ENCODE measurements at regions of chr15 and their contacts with region 1.

Region 1: DNA sequence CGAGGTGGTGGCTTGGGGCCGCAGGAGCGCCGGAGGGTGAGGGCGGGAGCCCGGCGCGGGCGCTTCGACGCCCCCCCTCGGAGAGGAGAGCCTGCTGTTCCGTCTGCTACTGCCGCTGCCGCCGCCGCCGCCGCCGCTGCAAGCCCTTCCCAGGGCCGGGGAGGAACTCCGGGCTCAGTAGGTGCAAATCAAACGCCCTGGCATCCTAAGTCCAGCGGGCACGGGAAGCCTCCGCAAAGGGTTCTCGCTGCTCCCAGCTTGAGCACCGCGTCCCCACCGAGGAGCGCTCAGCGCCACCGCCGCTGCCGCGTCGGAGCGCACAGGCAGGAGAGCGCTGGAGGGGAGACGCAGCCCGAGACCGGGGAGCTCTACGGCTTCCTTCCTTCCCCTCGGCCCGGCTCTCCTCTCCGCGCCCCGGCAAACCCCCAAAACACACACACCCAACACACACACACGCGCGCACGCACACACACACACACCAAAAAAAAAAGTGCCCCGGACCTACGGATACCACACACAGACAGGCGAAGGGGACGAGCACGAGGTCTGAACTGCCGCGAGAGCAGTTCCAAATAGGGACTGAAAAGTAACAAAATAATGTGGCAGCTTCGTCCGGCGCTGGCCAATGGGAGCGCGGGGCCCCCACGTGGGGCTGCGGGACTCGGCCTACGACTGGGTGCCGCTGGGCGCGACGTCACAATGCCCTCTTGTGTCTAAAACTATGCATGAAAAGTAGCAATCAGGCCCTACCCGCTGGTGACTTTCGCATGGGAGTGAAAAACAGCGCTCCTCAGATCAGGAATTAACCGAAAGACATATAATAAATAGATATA is at the start of gene TLE3:
- DNase-seq: peak; percentile 98
- H3K4me3 Mint-ChIP-seq: peak within 1 kb of the TSS; percentile 92
- H3K27ac Mint-ChIP-seq: peak within 1 kb of the TSS; percentile 93
- H3K4me1 Mint-ChIP-seq: peaks cover 26% of the 10 kb centered on the region
- H3K27me3 Mint-ChIP-seq: no peaks in the 10 kb centered on the region
- CTCF ChIP-seq: peak; percentile 35
- total RNA-seq, gene TLE3: 21.6 and 23.2 TPM in 2 replicates

Region 2: DNA sequence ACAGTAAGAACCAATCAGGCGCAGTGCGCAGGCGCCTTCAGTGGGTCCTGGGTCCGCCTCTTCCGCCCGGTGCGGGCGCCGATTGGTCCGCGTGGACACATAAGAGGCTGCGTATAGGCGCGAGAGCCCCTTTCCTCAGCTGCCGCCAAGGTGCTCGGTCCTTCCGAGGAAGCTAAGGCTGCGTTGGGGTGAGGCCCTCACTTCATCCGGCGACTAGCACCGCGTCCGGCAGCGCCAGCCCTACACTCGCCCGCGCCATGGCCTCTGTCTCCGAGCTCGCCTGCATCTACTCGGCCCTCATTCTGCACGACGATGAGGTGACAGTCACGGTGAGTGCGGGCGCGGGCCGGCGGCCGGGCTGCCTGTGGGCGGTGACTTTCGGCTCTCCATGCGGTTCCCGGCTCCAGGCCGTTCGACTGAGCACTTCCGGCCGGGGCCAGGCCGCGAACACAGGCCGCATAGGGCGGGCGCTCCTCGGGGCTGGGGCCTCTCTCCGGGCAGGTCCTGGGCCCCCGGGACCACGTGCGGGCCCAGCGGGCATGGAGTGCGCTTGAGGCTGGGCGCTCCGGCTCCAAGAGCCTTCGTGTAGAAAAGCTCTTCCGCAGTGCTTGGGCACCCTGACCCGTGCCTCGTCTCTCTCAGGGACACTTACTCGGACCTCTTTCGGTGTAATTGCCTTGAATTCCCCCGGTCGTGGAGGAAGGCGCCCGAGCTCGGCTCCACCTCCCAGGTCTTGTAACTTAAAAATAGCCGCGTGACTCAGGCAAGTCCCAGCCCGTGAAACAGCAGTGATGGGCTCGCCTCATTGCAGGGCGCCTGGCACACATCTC is 644.6 kb before region 1 on chr15 and contains the start of gene RPLP1:
- CTCF ChIA-PET with region 1: no interaction called
- POLR2A ChIA-PET with region 1: interaction called, 26 read pairs
- intact Hi-C with region 1: no loop called
- DNase-seq: peak; percentile 95
- H3K4me3 Mint-ChIP-seq: peak within 1 kb of the TSS; percentile 95
- H3K27ac Mint-ChIP-seq: peak within 1 kb of the TSS; percentile 95
- H3K4me1 Mint-ChIP-seq: peaks cover 8% of the 10 kb centered on the region
- H3K27me3 Mint-ChIP-seq: no peaks in the 10 kb centered on the region
- CTCF ChIP-seq: no peak
- total RNA-seq, gene RPLP1: 2,295 and 2,621 TPM in 2 replicates

Region 3: GRCh38 chr15:69523010-69524001 is 574.2 kb before region 1 on chr15:
- CTCF ChIA-PET with region 1: no interaction called
- POLR2A ChIA-PET with region 1: interaction called, 3 read pairs
- intact Hi-C with region 1: loop called (anchors 2 kb)
- DNase-seq: peak; percentile 76
- H3K4me3 Mint-ChIP-seq: no peak overlapping the region
- H3K27ac Mint-ChIP-seq: no peak overlapping the region
- H3K4me1 Mint-ChIP-seq: no peaks in the 10 kb centered on the region
- H3K27me3 Mint-ChIP-seq: peaks cover 11% of the 10 kb centered on the region
- CTCF ChIP-seq: peak; percentile 75

Region 4: GRCh38 chr15:69760890-69761568 is 336.5 kb before region 1 on chr15:
- CTCF ChIA-PET with region 1: interaction called, 3 read pairs
- POLR2A ChIA-PET with region 1: interaction called, 5 read pairs
- intact Hi-C with region 1: loop called (anchors 2 kb)
- DNase-seq: peak; percentile 97
- H3K4me3 Mint-ChIP-seq: no peak overlapping the region
- H3K27ac Mint-ChIP-seq: peak overlapping the region; percentile 73
- H3K4me1 Mint-ChIP-seq: peaks cover 23% of the 10 kb centered on the region
- H3K27me3 Mint-ChIP-seq: no peaks in the 10 kb centered on the region
- CTCF ChIP-seq: no peak

Region 5: GRCh38 chr15:69973102-69973712 is 124.3 kb before region 1 on chr15:
- CTCF ChIA-PET with region 1: no interaction called
- POLR2A ChIA-PET with region 1: no interaction called
- intact Hi-C with region 1: no loop called
- DNase-seq: peak; percentile 80
- H3K4me3 Mint-ChIP-seq: no peak overlapping the region
- H3K27ac Mint-ChIP-seq: no peak overlapping the region
- H3K4me1 Mint-ChIP-seq: no peaks in the 10 kb centered on the region
- H3K27me3 Mint-ChIP-seq: peaks cover 47% of the 10 kb centered on the region
- CTCF ChIP-seq: no peak

Region 6: DNA sequence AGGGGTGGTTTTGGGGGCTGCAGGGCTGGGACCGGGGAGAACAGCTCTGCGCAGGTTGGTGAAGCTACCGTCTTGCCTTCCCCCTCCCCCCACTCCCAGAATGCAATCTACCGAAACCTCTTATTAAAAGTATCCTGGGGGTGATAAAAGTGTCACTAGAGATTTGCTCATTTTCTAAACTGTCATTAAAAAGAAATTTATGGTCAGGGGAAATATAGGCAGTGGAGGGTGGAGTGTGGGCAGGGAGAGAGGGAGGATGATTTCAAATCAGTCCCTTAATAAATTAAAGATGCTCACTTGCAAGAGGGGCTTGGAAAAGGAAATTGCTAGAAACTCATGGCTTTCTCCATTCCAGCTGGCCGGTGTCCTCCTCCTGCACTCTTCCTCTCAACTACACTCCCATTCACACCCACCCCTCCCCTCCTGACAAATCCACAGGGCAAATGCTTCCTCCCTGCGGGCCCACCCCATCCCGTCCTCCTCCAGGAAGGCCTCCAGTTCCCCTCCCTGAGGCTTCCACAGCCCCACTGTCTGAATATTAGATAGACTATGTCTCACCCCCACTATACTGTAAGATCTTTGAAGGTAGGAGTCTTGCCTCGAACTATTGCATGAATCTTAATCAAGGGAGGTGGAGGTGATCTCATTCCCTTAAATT is 83.8 kb before region 1 on chr15:
- CTCF ChIA-PET with region 1: no interaction called
- POLR2A ChIA-PET with region 1: no interaction called
- intact Hi-C with region 1: no loop called
- DNase-seq: no peak
- H3K4me3 Mint-ChIP-seq: no peak overlapping the region
- H3K27ac Mint-ChIP-seq: no peak overlapping the region
- H3K4me1 Mint-ChIP-seq: no peaks in the 10 kb centered on the region
- H3K27me3 Mint-ChIP-seq: peaks cover 56% of the 10 kb centered on the region
- CTCF ChIP-seq: no peak

Region 7: DNA sequence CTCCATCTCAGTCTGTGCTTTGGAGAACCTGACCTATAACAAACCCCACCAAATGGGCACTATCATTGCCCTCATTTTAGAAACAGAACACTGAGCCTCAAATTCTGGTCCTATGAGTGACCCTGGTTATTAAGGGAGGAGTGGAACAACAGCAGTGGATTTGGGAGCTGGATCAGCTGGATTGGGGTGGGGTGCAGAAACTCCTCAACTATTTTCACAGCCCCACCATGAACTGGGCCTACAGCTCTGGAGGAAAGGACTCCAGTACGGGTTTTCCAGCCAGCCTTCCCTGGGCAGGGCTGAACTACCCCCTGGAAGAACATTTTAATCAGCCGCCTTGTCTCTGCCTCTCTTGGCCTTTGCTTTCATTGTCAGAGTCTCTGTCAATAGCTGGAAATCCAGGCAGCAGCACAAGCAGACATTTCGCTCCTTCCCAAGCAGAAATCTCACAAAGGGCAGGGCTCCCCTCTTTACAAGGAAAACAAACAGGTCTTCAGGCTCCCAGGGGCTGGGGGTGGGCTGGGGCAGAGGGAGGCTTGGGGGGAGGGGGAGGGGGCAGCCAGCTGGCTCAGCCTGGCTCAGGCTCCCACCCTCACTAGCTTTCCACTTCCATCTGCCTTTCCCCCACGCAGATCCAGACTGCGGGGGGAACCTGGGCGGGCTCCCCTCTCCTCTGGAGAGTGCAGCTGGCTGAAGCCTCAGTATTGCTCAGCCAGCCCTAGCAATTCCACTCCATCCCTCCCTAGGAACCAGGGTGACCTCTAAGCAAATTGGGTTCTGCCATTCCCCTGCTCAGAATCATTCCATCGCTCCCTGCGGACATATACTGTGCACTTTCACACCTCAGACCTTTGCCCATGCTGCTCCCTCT is 13.9 kb after region 1 on chr15:
- CTCF ChIA-PET with region 1: interaction called, 5 read pairs
- POLR2A ChIA-PET with region 1: interaction called, 53 read pairs
- intact Hi-C with region 1: loop called (anchors 1 kb)
- DNase-seq: peak; percentile 71
- H3K4me3 Mint-ChIP-seq: peak overlapping the region; percentile 28
- H3K27ac Mint-ChIP-seq: no peak overlapping the region
- H3K4me1 Mint-ChIP-seq: peaks cover 13% of the 10 kb centered on the region
- H3K27me3 Mint-ChIP-seq: peaks cover 15% of the 10 kb centered on the region
- CTCF ChIP-seq: no peak

Region 8: GRCh38 chr15:70271422-70272088 is 174.0 kb after region 1 on chr15:
- CTCF ChIA-PET with region 1: no interaction called
- POLR2A ChIA-PET with region 1: interaction called, 22 read pairs
- intact Hi-C with region 1: no loop called
- DNase-seq: peak; percentile 99
- H3K4me3 Mint-ChIP-seq: no peak overlapping the region
- H3K27ac Mint-ChIP-seq: peak overlapping the region; percentile 87
- H3K4me1 Mint-ChIP-seq: peaks cover 55% of the 10 kb centered on the region
- H3K27me3 Mint-ChIP-seq: no peaks in the 10 kb centered on the region
- CTCF ChIP-seq: no peak

Region 9: GRCh38 chr15:70504299-70504951 is 406.9 kb after region 1 on chr15:
- CTCF ChIA-PET with region 1: no interaction called
- POLR2A ChIA-PET with region 1: interaction called, 3 read pairs
- intact Hi-C with region 1: loop called (anchors 5 kb)
- DNase-seq: peak; percentile 78
- H3K4me3 Mint-ChIP-seq: no peak overlapping the region
- H3K27ac Mint-ChIP-seq: no peak overlapping the region
- H3K4me1 Mint-ChIP-seq: peaks cover 46% of the 10 kb centered on the region
- H3K27me3 Mint-ChIP-seq: no peaks in the 10 kb centered on the region
- CTCF ChIP-seq: no peak

Region 10: DNA sequence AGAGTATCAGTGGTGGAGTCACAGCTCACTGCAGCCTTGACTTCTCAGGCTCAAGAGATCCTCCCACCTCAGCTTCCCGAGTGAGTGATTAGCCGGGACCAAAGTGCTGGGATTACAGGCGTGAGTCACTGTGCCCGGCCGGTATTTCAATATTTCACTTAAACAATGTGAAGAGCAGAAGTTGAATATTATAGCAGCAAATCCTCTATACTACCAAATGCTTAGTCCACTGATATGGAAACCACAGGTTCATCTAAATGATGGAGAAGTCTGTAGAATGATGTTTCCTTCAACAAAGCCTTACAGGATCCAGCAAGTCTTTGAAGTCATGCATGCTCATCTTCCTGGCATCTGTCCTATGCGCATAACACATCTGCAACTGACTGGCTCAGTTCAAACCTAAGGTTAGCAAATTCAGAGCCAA is 686.1 kb after region 1 on chr15:
- CTCF ChIA-PET with region 1: no interaction called
- POLR2A ChIA-PET with region 1: no interaction called
- intact Hi-C with region 1: no loop called
- DNase-seq: peak; percentile 75
- H3K4me3 Mint-ChIP-seq: no peak overlapping the region
- H3K27ac Mint-ChIP-seq: no peak overlapping the region
- H3K4me1 Mint-ChIP-seq: peaks cover 26% of the 10 kb centered on the region
- H3K27me3 Mint-ChIP-seq: no peaks in the 10 kb centered on the region
- CTCF ChIP-seq: no peak